ENCODE measurements at regions of chr17 and their contacts with region 1.

Region 1: GRCh38 chr17:74305865-74306654 is 20.0 kb upstream of the KIF19 start:
- DNase-seq: no peak
- ATAC-seq: no peak
- H3K4me3 ChIP-seq: no peak overlapping the region
- H3K27ac ChIP-seq: no peak overlapping the region
- H3K4me1 ChIP-seq: no peaks in the 10 kb centered on the region
- H3K27me3 ChIP-seq: peaks cover 0 to 18% of the 10 kb centered on the region in 2 experiments; a peak in 3 of 5 replicates
- CTCF ChIP-seq: peak; percentile 46
- EP300 ChIP-seq: no peak
- POLR2A ChIP-seq: no peak
- RAD21 ChIP-seq: no peak

Region 2: GRCh38 chr17:74176546-74177001 is 129.5 kb before region 1 on chr17:
- CTCF ChIA-PET with region 1: no interaction called
- POLR2A ChIA-PET with region 1: no interaction called
- in situ Hi-C with region 1: no loop called
- intact Hi-C with region 1: no loop called
- DNase-seq: peak; percentile 60
- ATAC-seq: peak; percentile 94
- H3K4me3 ChIP-seq: no peak overlapping the region
- H3K27ac ChIP-seq: no peak overlapping the region
- H3K4me1 ChIP-seq: no peaks in the 10 kb centered on the region
- H3K27me3 ChIP-seq: peaks cover 7 to 41% of the 10 kb centered on the region in 2 experiments; a peak in 4 of 5 replicates
- CTCF ChIP-seq: peak; percentile 90
- EP300 ChIP-seq: no peak
- POLR2A ChIP-seq: no peak
- RAD21 ChIP-seq: peak; percentile 70

Region 3: DNA sequence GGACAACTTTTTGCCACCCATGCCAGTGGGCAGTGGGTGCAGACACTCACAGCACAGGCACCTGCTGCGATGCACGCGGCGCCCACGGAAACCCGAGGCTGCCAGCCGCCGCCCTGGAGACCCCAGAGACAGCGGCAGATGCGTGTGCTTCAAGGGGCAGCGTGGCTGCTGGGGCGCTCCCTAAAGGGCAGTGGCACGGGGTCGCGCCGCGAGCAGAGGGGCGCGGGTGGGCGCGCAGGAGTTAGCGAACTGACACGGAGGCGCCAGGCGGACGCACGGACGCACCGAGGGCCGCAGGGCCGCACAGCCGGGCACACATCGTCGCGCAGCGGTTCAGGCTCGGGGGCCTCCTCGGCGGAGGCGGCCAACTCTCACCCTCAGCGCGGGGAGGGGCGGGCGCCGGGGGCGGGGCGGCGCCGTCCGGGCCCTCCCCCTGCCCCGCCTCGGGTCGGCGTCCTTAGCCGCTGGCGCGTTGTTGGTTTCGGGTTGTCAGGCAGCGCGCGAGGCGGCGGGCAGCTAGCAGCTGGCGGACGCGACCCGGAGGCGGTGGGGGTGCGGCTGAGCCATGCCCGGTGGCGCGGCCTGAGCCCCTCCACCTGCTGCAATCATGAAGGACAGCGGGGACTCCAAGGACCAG is 19.8 kb after region 1 on chr17 and contains the start of gene KIF19:
- CTCF ChIA-PET with region 1: no interaction called
- POLR2A ChIA-PET with region 1: no interaction called
- in situ Hi-C with region 1: no loop called
- intact Hi-C with region 1: no loop called
- DNase-seq: no peak
- ATAC-seq: peak; percentile 51
- H3K4me3 ChIP-seq: peak within 1 kb of the TSS in 1 of 3 experiments; percentile 26; a peak in 1 of 6 replicates
- H3K27ac ChIP-seq: no peak within 1 kb of the TSS
- H3K4me1 ChIP-seq: no peaks in the 10 kb centered on the region
- H3K27me3 ChIP-seq: peaks cover 11 to 79% of the 10 kb centered on the region in 2 experiments
- CTCF ChIP-seq: no peak
- EP300 ChIP-seq: no peak
- POLR2A ChIP-seq: no peak
- RAD21 ChIP-seq: no peak
- total RNA-seq, gene KIF19: not detected in 2 replicates

Region 4: GRCh38 chr17:74354123-74354522 is 48.1 kb after region 1 on chr17:
- CTCF ChIA-PET with region 1: interaction called, 9 read pairs
- POLR2A ChIA-PET with region 1: no interaction called
- in situ Hi-C with region 1: loop called (anchors 5 kb)
- intact Hi-C with region 1: loop called (anchors 1 kb)
- DNase-seq: peak; percentile 67
- ATAC-seq: peak; percentile 92
- H3K4me3 ChIP-seq: no peak overlapping the region
- H3K27ac ChIP-seq: no peak overlapping the region
- H3K4me1 ChIP-seq: no peaks in the 10 kb centered on the region
- H3K27me3 ChIP-seq: peaks cover 17 to 88% of the 10 kb centered on the region in 2 experiments; a peak in 4 of 5 replicates
- CTCF ChIP-seq: peak; percentile 92
- EP300 ChIP-seq: no peak
- POLR2A ChIP-seq: no peak
- RAD21 ChIP-seq: peak; percentile 98